ENCODE measurements at regions of chr6 and their contacts with region 1.

Region 1: DNA sequence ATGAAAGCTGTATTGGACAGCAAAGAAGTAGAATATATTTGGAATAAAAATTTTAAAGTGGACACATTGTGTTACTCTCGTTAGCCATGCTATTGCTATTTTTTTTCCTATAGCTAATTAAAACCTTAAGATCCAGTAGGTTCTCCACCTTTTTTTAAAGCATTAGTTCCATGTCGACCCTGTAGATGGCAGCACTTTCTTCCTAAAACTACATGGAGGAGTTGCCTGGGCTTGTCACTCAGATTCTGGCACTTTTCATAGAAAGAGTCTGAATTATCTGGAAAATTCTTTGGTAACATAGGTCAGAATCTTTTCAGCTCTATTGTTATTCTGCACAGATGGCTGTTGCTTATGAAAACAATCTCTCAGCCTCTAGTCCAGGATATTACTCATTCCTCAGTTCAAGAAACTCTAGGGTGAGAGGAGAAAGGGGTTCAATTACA is 42.0 kb upstream of the ESR1 start:
- DNase-seq: peak; percentile 88
- ATAC-seq: no peak
- H3K4me3 ChIP-seq: peak overlapping the region; percentile 32; the same call in 1 of the 2 replicates
- H3K27ac ChIP-seq: 0 out of 2 replicates have a peak overlapping the region, but pooled peaks have one; percentile 13
- H3K4me1 ChIP-seq: peaks cover 11% of the 10 kb centered on the region
- H3K27me3 ChIP-seq: no peaks in the 10 kb centered on the region
- CTCF ChIP-seq: peak; percentile 79

Region 2: DNA sequence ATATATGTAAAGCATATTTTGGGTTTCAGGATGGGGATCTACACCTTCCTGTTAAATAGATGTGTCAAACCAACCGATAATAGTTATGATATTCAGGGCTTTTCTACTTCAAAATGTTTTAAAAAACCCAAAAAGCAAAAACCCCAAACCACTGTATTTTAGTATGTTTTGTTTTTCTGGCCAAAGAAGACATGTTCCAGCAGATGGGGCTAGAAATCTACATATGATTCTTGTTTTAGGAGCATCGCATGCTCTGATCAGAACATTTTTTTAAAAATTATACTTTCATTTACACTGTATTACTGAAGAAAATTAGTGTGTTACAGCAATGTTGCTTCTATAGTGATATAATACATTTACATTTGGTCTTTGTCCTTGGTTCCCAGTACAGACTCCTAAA is 324.5 kb before region 1 on chr6:
- CTCF ChIA-PET with region 1: no interaction called
- POLR2A ChIA-PET with region 1: no interaction called
- intact Hi-C with region 1: loop called (anchors 10 kb)
- DNase-seq: no peak
- ATAC-seq: no peak
- H3K4me3 ChIP-seq: no peak overlapping the region
- H3K27ac ChIP-seq: no peak overlapping the region
- H3K4me1 ChIP-seq: peaks cover 14% of the 10 kb centered on the region
- H3K27me3 ChIP-seq: no peaks in the 10 kb centered on the region
- CTCF ChIP-seq: peak; percentile 49

Region 3: DNA sequence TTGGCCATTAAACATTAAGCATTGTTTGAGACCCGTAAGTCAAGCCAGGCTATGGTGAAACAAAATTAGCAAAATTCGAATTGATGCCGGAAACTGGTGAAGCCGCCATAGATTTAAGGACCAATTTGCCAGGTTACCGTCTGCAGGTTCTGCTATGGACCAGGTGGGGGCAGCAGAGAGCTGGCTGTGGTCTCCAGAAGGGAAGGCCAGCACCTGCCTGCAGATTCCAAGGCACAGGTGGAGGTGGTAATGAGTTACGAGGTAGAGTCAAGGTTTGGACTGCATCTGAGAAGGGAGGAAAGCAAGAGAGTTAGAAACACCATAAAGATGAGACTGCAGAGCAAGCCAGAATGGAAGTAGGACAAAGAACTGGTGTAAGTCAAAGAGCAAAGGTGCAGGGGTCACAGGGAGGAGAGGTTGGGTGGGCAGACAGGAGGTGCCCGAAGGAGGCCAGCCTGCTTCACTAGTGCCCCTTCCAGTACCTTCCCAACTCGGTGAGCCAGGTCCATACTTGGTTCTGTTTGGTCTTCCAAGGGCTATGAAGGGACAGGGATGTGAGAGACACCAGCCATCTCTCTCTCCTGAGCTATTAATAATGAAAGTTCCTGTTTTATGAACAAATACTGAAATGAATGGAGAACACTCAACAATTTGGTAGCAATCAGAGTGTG is 89.6 kb before region 1 on chr6:
- CTCF ChIA-PET with region 1: no interaction called
- POLR2A ChIA-PET with region 1: no interaction called
- intact Hi-C with region 1: loop called (anchors 5 kb)
- DNase-seq: peak; percentile 67
- ATAC-seq: peak; percentile 58; the same call in 1 of the 2 replicates
- H3K4me3 ChIP-seq: 0 out of 2 replicates have a peak overlapping the region, but pooled peaks have one; percentile 26
- H3K27ac ChIP-seq: no peak overlapping the region
- H3K4me1 ChIP-seq: peaks cover 7% of the 10 kb centered on the region; the same call in 1 of the 2 replicates
- H3K27me3 ChIP-seq: no peaks in the 10 kb centered on the region
- CTCF ChIP-seq: peak; percentile 91

Region 4: GRCh38 chr6:151690768-151691562 is 74.5 kb before region 1 on chr6:
- CTCF ChIA-PET with region 1: no interaction called
- POLR2A ChIA-PET with region 1: no interaction called
- intact Hi-C with region 1: loop called (anchors 5 kb)
- DNase-seq: no peak
- ATAC-seq: no peak
- H3K4me3 ChIP-seq: peak overlapping the region; percentile 38
- H3K27ac ChIP-seq: no peak overlapping the region
- H3K4me1 ChIP-seq: peaks cover 17% of the 10 kb centered on the region
- H3K27me3 ChIP-seq: no peaks in the 10 kb centered on the region
- CTCF ChIP-seq: no peak

Region 5: DNA sequence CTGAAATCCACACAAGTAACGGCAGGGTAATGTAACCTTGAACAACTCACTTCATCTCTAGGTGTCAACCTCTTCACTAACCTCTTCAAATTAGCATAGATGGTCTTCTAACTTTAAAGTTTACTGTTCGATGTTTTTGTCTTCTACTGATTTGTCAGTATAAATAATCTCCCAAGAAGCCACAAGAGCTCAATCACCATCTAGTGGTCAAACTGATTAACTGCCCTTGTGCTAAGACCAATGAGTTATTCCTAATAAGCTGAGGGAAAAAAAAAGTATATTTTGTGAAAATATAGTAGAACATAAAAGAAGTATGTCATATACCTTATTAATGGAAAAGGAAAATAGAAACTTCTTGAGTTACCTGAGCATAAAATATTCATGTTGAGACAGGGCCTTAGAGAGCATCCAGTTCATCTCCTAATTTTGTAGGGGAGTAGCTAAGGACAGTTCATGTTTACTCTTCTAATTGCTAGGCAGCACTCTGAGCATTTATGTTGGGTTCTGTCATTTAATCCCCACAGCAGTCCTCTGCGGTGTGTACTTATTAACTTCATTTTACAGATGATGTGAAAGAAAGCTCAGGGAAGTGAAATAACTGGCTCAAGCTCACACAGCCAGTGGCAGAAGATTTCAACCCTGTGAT is 359.1 kb after region 1 on chr6:
- CTCF ChIA-PET with region 1: interaction called, 3 read pairs
- POLR2A ChIA-PET with region 1: no interaction called
- intact Hi-C with region 1: loop called (anchors 1 kb)
- DNase-seq: peak; percentile 78
- ATAC-seq: no peak
- H3K4me3 ChIP-seq: no peak overlapping the region
- H3K27ac ChIP-seq: no peak overlapping the region
- H3K4me1 ChIP-seq: peaks cover 10% of the 10 kb centered on the region
- H3K27me3 ChIP-seq: no peaks in the 10 kb centered on the region
- CTCF ChIP-seq: peak; percentile 83

Region 6: DNA sequence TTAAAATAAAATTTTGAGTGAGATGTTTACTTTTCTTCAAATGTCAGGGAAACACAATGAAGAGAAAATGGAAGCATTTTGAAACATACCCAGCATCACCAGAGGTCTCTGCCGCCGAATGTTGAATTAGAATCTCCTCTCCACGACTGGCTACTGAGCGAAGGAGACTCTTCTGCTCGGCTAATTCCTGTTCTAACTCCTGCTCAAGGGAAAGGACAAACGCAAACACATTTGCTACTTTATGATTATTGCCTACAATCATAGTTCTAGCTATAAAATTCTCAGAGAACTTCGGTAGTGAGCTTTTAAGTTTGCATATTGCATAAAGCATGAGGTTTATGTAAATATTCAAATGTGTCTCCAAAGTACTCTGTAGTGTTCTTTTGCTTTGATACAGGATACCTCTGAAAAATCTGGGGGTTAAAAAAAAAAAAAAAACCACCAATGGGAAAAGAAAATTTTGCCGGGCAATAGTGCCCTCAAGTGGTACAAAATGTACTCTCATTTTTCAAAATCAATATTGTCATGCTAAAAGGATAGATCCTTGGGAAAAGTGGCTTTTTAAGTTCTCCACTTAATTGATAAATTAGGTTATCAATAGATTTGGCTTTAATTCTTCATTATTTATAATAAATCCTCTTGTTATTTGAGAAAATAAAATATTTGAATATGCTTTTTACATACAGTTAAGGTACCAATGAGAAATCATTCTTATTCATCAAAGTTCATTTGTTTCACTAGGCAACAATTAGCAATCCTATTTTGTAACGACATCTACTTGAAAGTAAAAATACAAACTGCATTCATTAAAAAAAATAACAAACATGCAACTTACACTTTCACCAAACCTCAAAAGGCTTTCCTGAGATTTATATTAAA is 502.7 kb after region 1 on chr6:
- CTCF ChIA-PET with region 1: interaction called, 3 read pairs
- POLR2A ChIA-PET with region 1: no interaction called
- intact Hi-C with region 1: loop called (anchors 2 kb)
- DNase-seq: peak; percentile 69
- ATAC-seq: no peak
- H3K4me3 ChIP-seq: no peak overlapping the region
- H3K27ac ChIP-seq: no peak overlapping the region
- H3K4me1 ChIP-seq: peaks cover 39% of the 10 kb centered on the region
- H3K27me3 ChIP-seq: no peaks in the 10 kb centered on the region
- CTCF ChIP-seq: peak; percentile 66

Measured in PC-3 (cell line).